Calu3 (cell line): ENCODE measurements at regions of chr13 and their contacts with region 1.

Region 1: GRCh38 chr13:107867701-107868661 is 347.4 kb downstream of the LIG4 start:
- DNase-seq: peak; percentile 24
- H3K4me3 Mint-ChIP-seq: peak overlapping the region; percentile 75
- H3K27ac Mint-ChIP-seq: no peak overlapping the region
- H3K4me1 Mint-ChIP-seq: peaks cover 7% of the 10 kb centered on the region
- H3K27me3 Mint-ChIP-seq: no peaks in the 10 kb centered on the region
- CTCF ChIP-seq: no peak

Region 2: GRCh38 chr13:107205303-107206104 is 662.5 kb before region 1 on chr13:
- CTCF ChIA-PET with region 1: no interaction called
- intact Hi-C with region 1: loop called (anchors 5 kb)
- DNase-seq: peak; percentile 57
- H3K4me3 Mint-ChIP-seq: no peak overlapping the region
- H3K27ac Mint-ChIP-seq: no peak overlapping the region
- H3K4me1 Mint-ChIP-seq: no peaks in the 10 kb centered on the region
- H3K27me3 Mint-ChIP-seq: no peaks in the 10 kb centered on the region
- CTCF ChIP-seq: peak; percentile 53

Region 3: GRCh38 chr13:107373551-107373950 is 494.4 kb before region 1 on chr13:
- CTCF ChIA-PET with region 1: no interaction called
- intact Hi-C with region 1: loop called (anchors 10 kb)
- DNase-seq: no peak
- H3K4me3 Mint-ChIP-seq: no peak overlapping the region
- H3K27ac Mint-ChIP-seq: no peak overlapping the region
- H3K4me1 Mint-ChIP-seq: no peaks in the 10 kb centered on the region
- H3K27me3 Mint-ChIP-seq: no peaks in the 10 kb centered on the region
- CTCF ChIP-seq: no peak

Region 4: DNA sequence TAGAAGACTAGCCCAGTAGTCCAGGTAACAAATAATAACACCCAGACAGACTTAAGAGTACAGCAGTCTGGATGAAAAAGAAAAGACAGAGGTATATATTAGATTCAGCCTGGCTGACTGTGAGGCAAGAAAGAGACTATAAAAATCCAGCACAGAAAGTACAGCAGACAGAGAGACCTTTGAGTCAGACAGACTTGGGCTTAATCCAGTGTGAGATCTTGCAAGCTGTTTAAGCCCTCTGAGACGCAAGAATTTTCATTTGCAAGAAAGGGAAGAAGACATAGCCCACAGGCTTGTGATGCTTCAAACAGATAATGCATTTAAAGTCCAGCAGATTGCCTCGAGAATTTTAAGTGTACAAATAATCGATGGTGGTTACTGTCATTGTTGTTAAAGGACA is 124.0 kb before region 1 on chr13:
- CTCF ChIA-PET with region 1: no interaction called
- intact Hi-C with region 1: loop called (anchors 10 kb)
- DNase-seq: no peak
- H3K4me3 Mint-ChIP-seq: no peak overlapping the region
- H3K27ac Mint-ChIP-seq: no peak overlapping the region
- H3K4me1 Mint-ChIP-seq: no peaks in the 10 kb centered on the region
- H3K27me3 Mint-ChIP-seq: no peaks in the 10 kb centered on the region
- CTCF ChIP-seq: no peak

Region 5: DNA sequence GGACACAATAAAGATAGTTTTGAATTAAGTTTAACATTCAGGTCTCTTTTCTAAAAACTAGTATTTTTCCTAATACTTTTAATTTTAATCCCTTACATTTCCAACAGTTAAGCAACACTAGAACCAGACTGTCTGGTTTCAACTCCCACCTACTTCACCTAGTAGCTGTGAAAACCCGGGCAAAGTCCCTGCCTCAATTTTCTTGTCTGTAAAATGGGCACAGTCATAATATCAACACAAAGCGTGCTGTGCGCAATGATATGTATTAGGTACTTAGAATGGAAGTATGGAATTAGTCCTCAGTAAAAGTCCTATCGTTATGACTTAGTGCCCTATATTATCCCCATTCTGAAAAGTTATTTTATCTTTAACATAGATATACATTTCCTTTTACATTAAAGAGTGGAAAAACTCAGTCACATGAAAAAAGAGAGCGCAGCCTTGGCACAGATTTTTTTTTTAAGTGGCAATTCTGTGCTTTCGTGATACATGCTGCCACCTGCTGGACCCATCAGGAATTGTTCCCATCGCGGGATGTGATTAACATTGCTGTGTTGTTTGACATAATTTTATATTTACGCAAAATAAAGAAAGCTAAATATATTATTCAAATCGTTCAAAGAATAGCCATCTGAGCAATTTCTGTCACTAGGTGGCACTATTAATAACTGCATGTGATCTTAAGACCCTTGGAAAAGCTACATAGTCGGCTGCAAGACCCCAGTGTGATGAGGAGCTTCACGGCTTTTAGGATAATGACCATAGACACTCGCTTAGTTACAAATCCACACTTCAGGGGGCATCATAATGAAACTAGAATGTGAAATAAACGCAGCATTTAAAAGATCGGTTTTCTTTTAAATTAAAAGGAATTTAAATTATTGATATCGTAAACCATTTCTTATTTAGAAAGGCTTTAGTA is 287.5 kb after region 1 on chr13:
- CTCF ChIA-PET with region 1: no interaction called
- intact Hi-C with region 1: loop called (anchors 2 kb)
- DNase-seq: peak; percentile 48
- H3K4me3 Mint-ChIP-seq: no peak overlapping the region
- H3K27ac Mint-ChIP-seq: no peak overlapping the region
- H3K4me1 Mint-ChIP-seq: peaks cover 10% of the 10 kb centered on the region
- H3K27me3 Mint-ChIP-seq: no peaks in the 10 kb centered on the region
- CTCF ChIP-seq: no peak